ENCODE measurements at regions of chr19 and their contacts with region 1.

Region 1: GRCh38 chr19:53195265-53195903 is 2.2 kb upstream of the ZNF665 start:
- DNase-seq: peak; percentile 84 to 85
- H3K4me3 ChIP-seq: no peak overlapping the region
- H3K27ac ChIP-seq: no peak overlapping the region
- H3K4me1 ChIP-seq: peaks cover 8% of the 10 kb centered on the region in 2 donors
- H3K27me3 ChIP-seq: no peaks in the 10 kb centered on the region
- CTCF ChIP-seq: peak; percentile 80 to 97 (median 92)
- POLR2A ChIP-seq: no peak

Region 2: GRCh38 chr19:53365134-53365898 is 169.9 kb after region 1 on chr19 and contains the start of gene ZNF525:
- intact Hi-C with region 1: loop called (anchors 10 kb)
- DNase-seq: peak; percentile 95
- H3K4me3 ChIP-seq: peak within 1 kb of the TSS; percentile 0 to 77 (median 64)
- H3K27ac ChIP-seq: peak within 1 kb of the TSS in 2 of 3 donors; percentile 12 to 49
- H3K4me1 ChIP-seq: peaks cover 3 to 5% of the 10 kb centered on the region in 2 donors
- H3K27me3 ChIP-seq: no peaks in the 10 kb centered on the region
- CTCF ChIP-seq: peak in 3 of 6 experiments; percentile 1 to 33 (median 9)
- POLR2A ChIP-seq: peak in 1 of 2 donors; percentile 63
- total RNA-seq, gene ZNF525: 9.6 to 12.1 (median 11.6) TPM